ENCODE measurements at regions of chr9 and their contacts with region 1.

Region 1: DNA sequence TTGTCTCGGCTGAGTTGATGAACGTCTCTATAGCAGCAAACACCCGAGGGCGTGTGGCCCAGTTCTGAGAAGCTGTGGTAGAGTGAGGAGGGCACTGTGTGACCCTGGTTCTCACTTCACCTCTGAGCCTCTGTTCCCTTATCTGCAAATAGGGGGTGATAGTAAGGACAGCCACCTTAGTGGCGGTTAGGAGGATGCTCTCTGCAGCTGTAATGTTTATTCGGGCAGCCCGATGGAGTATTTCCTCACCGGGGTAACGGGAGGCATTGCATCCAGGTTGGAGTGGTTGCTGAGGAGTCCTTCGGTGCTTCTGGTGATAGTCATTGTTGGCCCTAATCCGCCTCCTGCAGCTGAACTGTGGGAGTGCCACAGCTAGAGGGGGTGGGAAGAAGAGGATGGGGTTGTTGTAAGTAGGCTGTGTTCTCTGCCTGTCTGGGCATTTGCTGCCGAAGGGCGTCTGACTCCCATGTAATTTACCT is 13.9 kb downstream of the PRRC2B start:
- DNase-seq: peak; percentile 51
- H3K4me3 Mint-ChIP-seq: peak overlapping the region; percentile 55
- H3K27ac Mint-ChIP-seq: peak overlapping the region; percentile 65
- H3K4me1 Mint-ChIP-seq: peaks cover 83% of the 10 kb centered on the region
- H3K27me3 Mint-ChIP-seq: no peaks in the 10 kb centered on the region

Region 2: DNA sequence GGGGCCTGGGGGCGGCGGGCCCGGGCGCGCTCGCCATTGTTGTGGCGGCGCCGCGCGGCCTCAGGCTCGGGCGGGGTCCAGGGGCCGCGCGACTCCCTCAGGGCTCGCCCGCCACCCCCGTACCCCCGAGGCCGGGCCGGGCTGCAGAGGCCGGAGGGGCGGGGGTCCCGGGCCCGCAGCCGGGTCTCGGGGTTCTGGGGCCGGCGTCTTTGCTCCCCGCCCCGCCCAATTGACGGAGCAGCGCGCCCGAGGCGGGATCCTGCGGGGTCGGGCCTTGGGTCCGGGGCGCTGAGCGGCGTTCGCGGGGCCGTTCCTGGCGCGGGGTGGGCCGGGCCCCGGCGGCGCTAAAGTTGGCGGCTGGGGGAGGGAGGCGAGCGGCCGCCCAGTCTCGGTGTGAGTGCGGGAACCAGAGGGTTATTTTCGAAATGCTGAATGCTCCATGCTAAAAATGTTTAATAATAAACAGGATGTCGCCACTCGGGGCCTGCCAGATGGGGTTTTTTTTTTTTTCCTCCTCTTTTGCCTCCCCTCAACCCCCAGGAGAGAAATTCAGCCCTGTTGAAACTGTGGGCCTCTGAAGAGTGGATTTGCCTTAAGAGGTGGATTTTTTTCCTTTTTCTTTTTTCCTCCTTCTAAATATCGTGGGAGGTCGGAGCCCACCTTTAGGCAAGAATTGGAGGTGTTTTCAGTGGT is 13.1 kb before region 1 on chr9:
- CTCF ChIA-PET with region 1: interaction called, 20 read pairs
- POLR2A ChIA-PET with region 1: interaction called, 30 read pairs
- DNase-seq: peak; percentile 57
- H3K4me3 Mint-ChIP-seq: peak overlapping the region; percentile 81
- H3K27ac Mint-ChIP-seq: peak overlapping the region; percentile 92
- H3K4me1 Mint-ChIP-seq: peaks cover 52% of the 10 kb centered on the region
- H3K27me3 Mint-ChIP-seq: peaks cover 7% of the 10 kb centered on the region

Region 3: DNA sequence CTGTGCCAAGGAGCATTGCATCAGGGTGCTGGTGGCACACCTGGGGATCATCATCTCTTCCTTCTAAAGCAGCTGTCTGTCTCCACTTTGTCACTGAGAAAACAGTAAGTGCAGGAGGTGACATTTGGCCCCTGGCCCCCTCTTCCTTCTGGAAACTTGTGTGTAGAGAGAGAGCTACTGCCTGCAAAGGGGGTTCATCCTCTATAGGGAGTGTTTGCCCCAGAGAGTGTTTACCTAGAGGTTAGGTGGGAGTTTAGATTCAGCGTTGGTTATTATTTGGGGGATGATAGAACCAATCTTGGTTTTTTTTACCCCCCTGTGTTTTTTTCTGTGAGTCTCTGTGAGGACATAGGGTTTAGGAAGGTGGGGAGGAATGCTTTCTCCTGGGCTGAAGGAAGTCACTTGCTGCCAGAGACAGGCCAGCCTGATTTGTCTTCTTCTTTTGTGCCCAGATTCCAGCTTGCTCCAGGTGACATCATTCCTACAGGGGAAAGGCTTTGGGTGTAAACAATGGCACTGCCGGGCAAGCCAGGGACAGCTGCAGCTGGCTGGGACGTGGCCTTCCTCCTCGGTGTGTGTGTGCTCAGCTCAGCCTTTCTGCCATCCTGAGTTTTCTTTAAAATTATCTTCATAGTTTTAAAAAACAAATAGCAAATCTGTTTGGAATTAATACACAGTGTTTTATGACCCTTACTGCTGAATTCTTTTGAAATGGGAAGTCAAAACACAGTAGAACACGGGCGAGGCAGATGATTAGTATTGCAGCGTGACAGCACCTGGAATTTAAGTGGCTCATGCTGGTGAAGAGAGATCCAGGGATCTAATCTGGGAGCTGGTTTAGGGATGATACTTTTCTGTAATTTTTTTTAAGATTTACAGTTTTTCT is 10.6 kb after region 1 on chr9:
- CTCF ChIA-PET with region 1: interaction called, 18 read pairs
- POLR2A ChIA-PET with region 1: interaction called, 5 read pairs
- DNase-seq: no peak
- H3K4me3 Mint-ChIP-seq: peak overlapping the region; percentile 26
- H3K27ac Mint-ChIP-seq: peak overlapping the region; percentile 77
- H3K4me1 Mint-ChIP-seq: peaks cover 76% of the 10 kb centered on the region
- H3K27me3 Mint-ChIP-seq: no peaks in the 10 kb centered on the region

Region 4: GRCh38 chr9:131709771-131710454 is 302.2 kb after region 1 on chr9:
- CTCF ChIA-PET with region 1: no interaction called
- POLR2A ChIA-PET with region 1: no interaction called
- DNase-seq: peak; percentile 44
- H3K4me3 Mint-ChIP-seq: peak overlapping the region; percentile 39
- H3K27ac Mint-ChIP-seq: peak overlapping the region; percentile 88
- H3K4me1 Mint-ChIP-seq: peaks cover 79% of the 10 kb centered on the region
- H3K27me3 Mint-ChIP-seq: no peaks in the 10 kb centered on the region

Measured in activated CD4-positive, alpha-beta memory T cell treated with anti-CD3 and anti-CD28 coated beads, Interleukin-2, amount 10 ng/mL, durations not matched to agents 7 days and 5 days (primary cell).